Lower leg skin (tissue), 4 donors: ENCODE measurements at regions of chr12 and their contacts with region 1.

Region 1: GRCh38 chr12:6039894-6040568 is 84.4 kb downstream of the VWF start:
- DNase-seq: peak in 1 of 2 donors; percentile 55
- H3K4me3 ChIP-seq: no peak overlapping the region
- CTCF ChIP-seq: peak in 1 of 3 donors; percentile 81
- POLR2A ChIP-seq: no peak

Region 2: GRCh38 chr12:5988659-5989116 is 51.3 kb before region 1 on chr12:
- intact Hi-C with region 1: loop called (anchors 5 kb)
- DNase-seq: peak; percentile 56 to 93
- H3K4me3 ChIP-seq: no peak overlapping the region
- CTCF ChIP-seq: peak in 1 of 3 donors; percentile 7
- POLR2A ChIP-seq: no peak

Region 3: DNA sequence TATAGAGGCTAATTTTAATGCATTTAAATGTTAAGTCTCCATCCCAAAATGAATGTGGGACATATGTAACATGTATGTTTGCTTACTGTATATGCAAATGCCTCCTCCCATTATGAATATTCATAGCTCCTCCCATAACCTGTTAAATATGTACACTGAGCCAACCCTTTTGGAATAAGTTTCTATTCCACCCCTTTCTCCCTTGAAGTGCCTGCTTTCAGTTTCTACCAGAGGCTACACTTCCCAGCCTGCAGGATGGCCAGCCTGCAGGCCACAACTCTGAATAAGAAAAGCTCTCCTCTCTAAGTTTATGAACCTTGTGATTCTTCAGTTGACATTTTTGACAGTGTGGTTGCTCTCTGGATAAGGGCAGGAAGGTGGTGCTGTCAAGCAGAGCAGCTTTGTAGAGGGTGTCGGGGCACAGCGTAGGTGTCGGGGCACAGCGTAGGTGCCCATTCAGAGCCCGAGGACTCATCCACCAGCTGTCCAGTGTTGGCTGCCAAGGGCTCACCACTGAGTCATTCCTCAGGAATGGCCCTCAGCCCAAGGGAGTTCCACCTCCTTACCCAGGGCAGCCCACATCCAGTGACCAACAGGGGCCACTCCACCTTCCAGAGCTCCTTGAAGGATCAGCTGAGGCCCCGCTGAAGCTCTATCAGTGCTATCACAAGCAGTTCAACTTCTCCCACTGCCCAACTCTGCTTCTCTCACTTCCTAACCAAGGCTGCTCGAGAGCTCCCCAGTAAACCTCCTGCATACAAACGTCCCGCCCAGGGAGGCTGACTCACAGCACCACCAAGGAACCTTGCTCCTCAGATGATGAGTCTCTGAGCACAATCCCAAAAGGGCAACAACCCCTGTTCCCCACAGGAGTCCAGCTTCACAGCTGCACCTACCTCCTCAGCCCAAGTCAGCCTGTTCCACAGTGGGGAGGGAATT is 53.0 kb after region 1 on chr12:
- intact Hi-C with region 1: loop called (anchors 1 kb)
- DNase-seq: peak in 1 of 2 donors; percentile 87
- H3K4me3 ChIP-seq: no peak overlapping the region
- CTCF ChIP-seq: no peak
- POLR2A ChIP-seq: no peak